ENCODE measurements at regions of chr6 and their contacts with region 1.

Region 1: DNA sequence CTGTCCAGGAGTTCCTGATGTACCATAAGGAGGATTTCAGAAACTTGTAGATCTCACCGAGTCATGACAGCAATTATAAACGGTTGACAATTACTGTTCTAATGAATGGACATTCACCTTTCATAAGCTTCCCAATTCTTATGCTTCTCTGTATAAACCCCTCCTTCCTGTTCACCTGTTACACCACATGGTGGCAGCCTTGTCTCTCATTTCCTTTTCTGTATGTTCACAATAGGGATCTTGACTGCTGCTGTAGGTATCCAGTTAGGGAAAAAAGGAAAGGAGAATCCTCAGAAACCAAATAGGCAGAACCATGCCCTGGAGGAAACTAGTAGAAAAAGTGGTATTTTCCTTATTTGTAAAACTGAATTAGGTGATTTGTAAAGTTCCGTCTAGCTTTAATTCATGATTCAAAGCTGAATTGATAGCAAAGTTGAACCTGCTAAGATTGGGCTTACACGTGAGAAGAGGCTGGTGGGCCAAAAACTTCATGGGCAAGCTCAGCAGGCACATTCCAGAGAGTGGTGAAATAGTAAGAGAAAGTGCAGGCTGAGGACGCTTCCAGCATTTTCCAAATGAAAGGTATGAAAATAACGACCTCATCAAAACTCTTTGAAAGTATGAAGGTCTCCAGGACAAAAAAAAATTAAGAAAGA is 29.0 kb upstream of the TBPL1 start:
- DNase-seq: peak; percentile 73
- ATAC-seq: peak; percentile 98
- H3K4me3 ChIP-seq: no peak overlapping the region
- H3K27ac ChIP-seq: no peak overlapping the region
- H3K4me1 ChIP-seq: peaks cover 5% of the 10 kb centered on the region; the same call in 1 of the 2 replicates
- H3K27me3 ChIP-seq: no peaks in the 10 kb centered on the region
- CTCF ChIP-seq: peak; percentile 77

Region 2: GRCh38 chr6:133837801-133838349 is 86.2 kb before region 1 on chr6:
- CTCF ChIA-PET with region 1: interaction called, 9 read pairs
- POLR2A ChIA-PET with region 1: no interaction called
- in situ Hi-C with region 1: no loop called
- intact Hi-C with region 1: loop called (anchors 1 kb)
- DNase-seq: peak; percentile 20
- ATAC-seq: peak; percentile 97
- H3K4me3 ChIP-seq: peak overlapping the region; percentile 46 to 58
- H3K27ac ChIP-seq: no peak overlapping the region
- H3K4me1 ChIP-seq: no peaks in the 10 kb centered on the region
- H3K27me3 ChIP-seq: peaks cover 2% of the 10 kb centered on the region
- CTCF ChIP-seq: peak; percentile 95

Region 3: DNA sequence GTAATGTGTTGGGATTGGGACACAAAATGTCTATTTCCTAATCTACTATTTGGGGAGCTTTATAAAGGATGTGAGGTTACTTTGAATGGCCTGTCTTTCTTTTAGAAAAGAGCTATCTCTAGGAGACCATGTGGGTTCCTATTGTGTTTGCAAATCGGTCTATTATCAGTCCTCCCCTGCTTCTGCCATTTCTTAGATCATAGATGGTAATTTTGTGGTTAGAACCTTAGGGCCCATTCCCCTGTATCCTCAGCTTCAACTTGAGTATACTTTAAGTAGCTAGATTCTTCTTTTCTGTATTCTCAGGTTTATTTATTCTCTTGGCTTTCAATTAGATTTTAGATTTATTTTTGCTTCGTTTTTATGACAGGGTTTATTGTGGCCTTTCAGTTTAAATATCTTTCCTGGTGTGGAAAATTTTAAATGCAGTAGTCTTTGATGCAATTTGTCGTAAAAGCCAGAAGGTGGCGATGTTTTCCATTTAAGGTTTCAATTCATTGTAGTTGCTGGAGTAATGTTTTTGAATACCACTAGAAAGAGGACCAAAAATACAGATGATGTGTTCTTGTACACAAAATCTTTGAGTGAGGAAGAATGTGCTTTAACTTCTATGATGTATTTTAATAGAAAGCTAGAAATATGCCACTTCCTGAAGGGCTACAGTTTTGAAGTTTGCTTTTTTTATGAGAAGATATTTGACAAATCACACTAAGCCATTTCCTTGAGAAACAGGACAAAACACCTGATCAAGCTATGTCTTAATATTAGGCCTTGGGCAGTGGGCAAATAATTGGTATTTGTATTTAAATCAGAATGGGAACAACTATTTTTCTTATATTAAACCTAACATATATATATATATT is 49.3 kb after region 1 on chr6:
- CTCF ChIA-PET with region 1: no interaction called
- POLR2A ChIA-PET with region 1: no interaction called
- in situ Hi-C with region 1: no loop called
- intact Hi-C with region 1: loop called (anchors 5 kb)
- DNase-seq: no peak
- ATAC-seq: peak; percentile 72
- H3K4me3 ChIP-seq: no peak overlapping the region
- H3K27ac ChIP-seq: peak overlapping the region; percentile 23
- H3K4me1 ChIP-seq: peaks cover 33% of the 10 kb centered on the region
- H3K27me3 ChIP-seq: no peaks in the 10 kb centered on the region
- CTCF ChIP-seq: peak; percentile 73; the same call in 1 of the 2 replicates

Region 4: DNA sequence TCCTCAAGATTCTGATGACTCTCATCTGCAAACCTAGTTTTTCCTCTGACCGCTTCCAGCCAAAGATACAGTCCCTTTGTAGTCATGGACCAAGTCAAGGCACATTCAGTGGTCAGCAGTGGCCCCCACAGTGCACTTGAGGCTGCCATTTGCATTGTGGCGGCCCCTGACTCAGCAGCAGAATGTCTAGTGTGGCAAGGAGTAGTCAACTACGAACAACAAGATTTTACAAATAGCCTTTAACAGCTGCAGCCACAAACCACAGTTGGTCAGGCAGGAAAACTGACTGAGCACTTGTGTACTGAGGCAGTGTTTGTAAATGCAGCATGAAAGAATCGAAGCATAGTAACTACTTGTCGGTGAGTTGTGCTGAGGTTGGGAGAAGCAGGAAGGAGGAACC is 78.8 kb after region 1 on chr6:
- CTCF ChIA-PET with region 1: no interaction called
- POLR2A ChIA-PET with region 1: no interaction called
- in situ Hi-C with region 1: no loop called
- intact Hi-C with region 1: no loop called
- DNase-seq: no peak
- ATAC-seq: no peak
- H3K4me3 ChIP-seq: no peak overlapping the region
- H3K27ac ChIP-seq: 0 out of 2 replicates have a peak overlapping the region, but pooled peaks have one; percentile 17
- H3K4me1 ChIP-seq: no peaks in the 10 kb centered on the region; the same call in 1 of the 2 replicates
- H3K27me3 ChIP-seq: no peaks in the 10 kb centered on the region
- CTCF ChIP-seq: no peak